ENCODE measurements at regions of chr12 and their contacts with region 1.

Region 1: DNA sequence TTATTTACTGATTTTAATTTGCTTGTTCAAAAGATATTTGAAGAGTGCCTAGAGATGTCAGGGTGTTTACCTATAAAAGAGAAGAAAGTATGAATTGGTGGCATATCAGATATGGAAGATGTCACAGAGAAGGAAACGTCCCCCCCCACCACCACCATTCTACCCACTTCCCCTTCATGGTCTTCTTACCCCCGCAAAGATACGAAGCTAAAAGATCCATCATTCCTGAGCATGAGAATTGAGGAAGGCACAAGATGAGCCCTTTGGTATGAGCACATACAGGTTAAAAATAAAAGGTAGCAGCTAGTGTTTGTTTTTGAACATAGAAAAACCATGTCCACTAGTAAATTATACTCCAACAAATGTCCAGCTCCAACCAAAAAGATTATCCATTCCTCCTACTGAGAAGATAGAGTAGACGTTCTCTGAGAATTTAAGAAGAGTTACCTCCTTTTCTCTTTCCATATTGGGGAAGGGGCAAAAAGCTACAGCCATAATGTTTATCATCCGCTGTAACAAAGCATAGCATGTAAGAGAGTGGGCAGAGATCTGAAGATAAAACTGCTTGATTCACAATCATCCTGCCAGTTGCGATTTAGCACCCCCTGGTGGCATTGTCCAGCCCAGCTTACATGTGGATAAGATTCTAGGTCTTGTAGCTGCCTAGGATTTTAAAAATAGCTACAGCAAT is 29.1 kb downstream of the NFYB start:
- DNase-seq: peak; percentile 54 to 65 (median 61)
- H3K4me3 ChIP-seq: no peak overlapping the region
- H3K4me3 Mint-ChIP-seq: no peak overlapping the region
- H3K27ac ChIP-seq: no peak overlapping the region
- H3K27ac Mint-ChIP-seq: no peak overlapping the region
- H3K4me1 ChIP-seq: no peaks in the 10 kb centered on the region
- H3K4me1 Mint-ChIP-seq: peaks cover 10% of the 10 kb centered on the region
- H3K27me3 ChIP-seq: no peaks in the 10 kb centered on the region
- H3K27me3 Mint-ChIP-seq: no peaks in the 10 kb centered on the region
- CTCF ChIP-seq: peak; percentile 93

Region 2: GRCh38 chr12:103771466-103771865 is 337.4 kb before region 1 on chr12:
- intact Hi-C with region 1: loop called in 1 of 2 experiments (anchors 5 kb)
- DNase-seq: peak; percentile 30 to 39 (median 33)
- H3K4me3 ChIP-seq: no peak overlapping the region
- H3K4me3 Mint-ChIP-seq: no peak overlapping the region
- H3K27ac ChIP-seq: no peak overlapping the region
- H3K27ac Mint-ChIP-seq: peak overlapping the region in 2 of 7 donors; percentile 16 to 63
- H3K4me1 ChIP-seq: no peaks in the 10 kb centered on the region
- H3K4me1 Mint-ChIP-seq: peaks cover 6% of the 10 kb centered on the region
- H3K27me3 ChIP-seq: no peaks in the 10 kb centered on the region
- H3K27me3 Mint-ChIP-seq: no peaks in the 10 kb centered on the region
- CTCF ChIP-seq: peak; percentile 72

Region 3: GRCh38 chr12:103884316-103884715 is 224.6 kb before region 1 on chr12:
- intact Hi-C with region 1: loop called (anchors 5 to 10 kb)
- DNase-seq: peak; percentile 17 to 28 (median 17)
- H3K4me3 ChIP-seq: no peak overlapping the region
- H3K4me3 Mint-ChIP-seq: no peak overlapping the region
- H3K27ac ChIP-seq: no peak overlapping the region
- H3K27ac Mint-ChIP-seq: no peak overlapping the region
- H3K4me1 ChIP-seq: no peaks in the 10 kb centered on the region
- H3K4me1 Mint-ChIP-seq: peaks cover 5% of the 10 kb centered on the region
- H3K27me3 ChIP-seq: no peaks in the 10 kb centered on the region
- H3K27me3 Mint-ChIP-seq: peaks cover 0 to 2% (median 0%) of the 10 kb centered on the region in 3 donors
- CTCF ChIP-seq: peak; percentile 25

Region 4: GRCh38 chr12:104064031-104064822 is 44.7 kb before region 1 on chr12 and contains the start of gene HCFC2:
- intact Hi-C with region 1: loop called in 1 of 2 experiments (anchors 5 kb)
- DNase-seq: peak; percentile 76 to 79 (median 79)
- H3K4me3 ChIP-seq: peak within 1 kb of the TSS; percentile 57 to 96 (median 95)
- H3K4me3 Mint-ChIP-seq: peak within 1 kb of the TSS; percentile 93 to 95
- H3K27ac ChIP-seq: peak within 1 kb of the TSS; percentile 26 to 82
- H3K27ac Mint-ChIP-seq: peak within 1 kb of the TSS; percentile 87 to 96 (median 92)
- H3K4me1 ChIP-seq: peaks cover 14 to 22% of the 10 kb centered on the region in 2 donors
- H3K4me1 Mint-ChIP-seq: peaks cover 23% of the 10 kb centered on the region
- H3K27me3 ChIP-seq: peaks cover 0 to 8% of the 10 kb centered on the region in 2 donors
- H3K27me3 Mint-ChIP-seq: peaks cover 8 to 19% (median 12%) of the 10 kb centered on the region in 3 donors
- CTCF ChIP-seq: no peak
- polyA plus RNA-seq, gene HCFC2: 3.3 to 8.7 (median 4.3) TPM

Measured in CD14-positive monocyte (primary cell).